Caco-2 (cell line): ENCODE measurements at regions of chr2 and their contacts with region 1.

Region 1: DNA sequence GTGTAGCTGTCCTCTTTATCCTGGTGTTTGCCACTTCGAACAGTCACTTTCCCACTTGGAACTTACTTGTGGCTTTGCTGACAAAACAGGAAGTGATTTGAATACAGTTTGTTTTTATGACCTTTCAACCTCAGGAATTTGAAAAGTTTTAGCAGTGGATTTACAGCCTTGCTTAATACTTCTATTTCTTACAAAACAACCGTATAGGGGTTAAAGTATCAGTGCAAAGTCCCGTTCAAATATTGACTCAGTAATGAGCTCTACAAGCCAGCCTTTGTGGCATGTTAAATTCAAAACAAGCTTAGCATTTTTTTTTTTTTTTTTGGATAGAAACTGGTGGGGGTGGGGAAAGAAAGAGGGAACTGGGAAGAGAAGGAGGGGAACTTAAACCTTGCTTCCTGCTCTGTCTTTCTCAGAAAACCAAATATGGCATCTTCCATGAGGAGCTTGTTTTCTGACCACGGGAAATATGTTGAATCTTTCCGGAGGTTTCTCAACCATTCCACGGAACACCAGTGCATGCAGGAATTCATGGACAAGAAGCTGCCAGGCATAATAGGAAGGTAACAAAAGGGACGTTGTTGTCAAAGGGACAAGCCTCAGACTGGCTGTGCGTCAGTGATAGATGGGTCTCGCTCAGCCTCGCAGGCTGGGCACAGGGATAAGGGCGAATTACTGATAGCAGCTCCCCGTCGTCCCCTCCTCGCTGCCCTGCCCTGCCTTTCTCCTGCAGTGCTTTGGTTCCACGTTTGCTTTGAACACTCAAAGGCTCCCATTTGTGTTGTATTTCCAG is at the start of gene HNMT:
- DNase-seq: peak; percentile 80 to 84
- H3K4me3 ChIP-seq: peak within 1 kb of the TSS; percentile 50
- H3K4me3 Mint-ChIP-seq: peak within 1 kb of the TSS; percentile 93
- H3K27ac Mint-ChIP-seq: peak within 1 kb of the TSS; percentile 98
- H3K4me1 ChIP-seq: peaks cover 40% of the 10 kb centered on the region
- H3K4me1 Mint-ChIP-seq: peaks cover 24% of the 10 kb centered on the region
- H3K27me3 ChIP-seq: no peaks in the 10 kb centered on the region
- H3K27me3 Mint-ChIP-seq: no peaks in the 10 kb centered on the region
- CTCF ChIP-seq: no peak
- total RNA-seq, gene HNMT: 42.8 and 44.6 TPM in 2 replicates

Region 2: DNA sequence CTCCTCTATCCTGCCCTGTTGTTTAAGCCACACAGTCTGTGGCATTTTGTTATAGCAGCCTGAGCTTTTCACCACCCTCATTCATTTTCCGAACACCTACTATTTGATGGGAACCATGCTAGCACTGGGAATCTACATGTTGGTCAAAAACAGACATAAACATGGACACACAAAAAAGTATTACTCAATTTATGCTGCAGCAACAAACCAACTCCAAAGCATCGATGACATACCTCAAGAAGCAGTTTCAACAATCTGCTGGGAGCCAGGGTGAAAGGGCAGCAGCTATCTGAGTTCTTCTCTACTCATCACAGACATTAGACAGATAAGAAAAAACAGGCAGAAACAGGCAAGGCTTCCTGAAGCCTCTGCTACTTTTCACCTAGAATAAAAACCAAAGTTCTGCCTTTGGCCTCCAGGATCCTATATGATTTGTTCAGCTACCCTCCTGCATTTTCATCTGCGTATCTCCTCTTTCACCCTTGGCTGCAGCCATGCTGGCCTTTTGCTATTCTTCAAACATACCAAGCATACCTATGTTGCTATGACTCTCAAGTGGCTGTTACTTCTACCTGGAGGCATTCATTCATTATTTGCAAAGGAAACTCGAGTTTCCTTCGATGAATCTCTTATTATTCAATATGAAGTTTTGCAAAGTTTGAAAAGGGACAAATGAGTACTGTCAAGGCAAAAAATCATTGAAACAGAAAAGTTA is 106.5 kb before region 1 on chr2:
- CTCF ChIA-PET with region 1: no interaction called
- POLR2A ChIA-PET with region 1: no interaction called
- intact Hi-C with region 1: no loop called
- DNase-seq: peak; percentile 60 to 63
- H3K4me3 ChIP-seq: no peak overlapping the region
- H3K4me3 Mint-ChIP-seq: peak overlapping the region; percentile 57
- H3K27ac Mint-ChIP-seq: peak overlapping the region; percentile 76
- H3K4me1 ChIP-seq: peaks cover 43% of the 10 kb centered on the region
- H3K4me1 Mint-ChIP-seq: peaks cover 36% of the 10 kb centered on the region
- H3K27me3 ChIP-seq: no peaks in the 10 kb centered on the region
- H3K27me3 Mint-ChIP-seq: no peaks in the 10 kb centered on the region
- CTCF ChIP-seq: no peak

Region 3: DNA sequence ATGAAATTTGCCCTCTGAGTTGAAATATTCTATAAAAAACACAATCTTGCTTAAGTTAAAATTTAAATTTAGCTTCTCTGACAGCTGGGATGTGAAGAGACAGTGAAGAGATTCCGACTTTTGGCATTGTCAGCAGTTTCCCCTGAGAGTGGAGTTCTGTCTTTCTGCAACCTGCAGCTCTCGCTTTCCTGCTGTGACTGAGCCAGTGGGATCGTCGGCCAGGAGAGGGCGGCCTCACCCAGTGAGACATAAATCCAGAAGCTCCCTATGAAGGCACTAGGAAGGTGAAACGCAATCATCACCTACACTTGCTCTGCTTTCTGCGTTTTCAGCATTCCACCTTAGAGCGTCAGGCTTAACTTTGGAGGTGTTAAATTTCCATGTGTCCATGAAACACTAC is 75.4 kb before region 1 on chr2:
- CTCF ChIA-PET with region 1: interaction called, 19 read pairs
- POLR2A ChIA-PET with region 1: interaction called, 3 read pairs
- intact Hi-C with region 1: no loop called
- DNase-seq: peak; percentile 75 to 76
- H3K4me3 ChIP-seq: no peak overlapping the region
- H3K4me3 Mint-ChIP-seq: no peak overlapping the region
- H3K27ac Mint-ChIP-seq: no peak overlapping the region
- H3K4me1 ChIP-seq: peaks cover 12% of the 10 kb centered on the region
- H3K4me1 Mint-ChIP-seq: peaks cover 11% of the 10 kb centered on the region
- H3K27me3 ChIP-seq: no peaks in the 10 kb centered on the region
- H3K27me3 Mint-ChIP-seq: no peaks in the 10 kb centered on the region
- CTCF ChIP-seq: peak; percentile 69 to 81

Region 4: DNA sequence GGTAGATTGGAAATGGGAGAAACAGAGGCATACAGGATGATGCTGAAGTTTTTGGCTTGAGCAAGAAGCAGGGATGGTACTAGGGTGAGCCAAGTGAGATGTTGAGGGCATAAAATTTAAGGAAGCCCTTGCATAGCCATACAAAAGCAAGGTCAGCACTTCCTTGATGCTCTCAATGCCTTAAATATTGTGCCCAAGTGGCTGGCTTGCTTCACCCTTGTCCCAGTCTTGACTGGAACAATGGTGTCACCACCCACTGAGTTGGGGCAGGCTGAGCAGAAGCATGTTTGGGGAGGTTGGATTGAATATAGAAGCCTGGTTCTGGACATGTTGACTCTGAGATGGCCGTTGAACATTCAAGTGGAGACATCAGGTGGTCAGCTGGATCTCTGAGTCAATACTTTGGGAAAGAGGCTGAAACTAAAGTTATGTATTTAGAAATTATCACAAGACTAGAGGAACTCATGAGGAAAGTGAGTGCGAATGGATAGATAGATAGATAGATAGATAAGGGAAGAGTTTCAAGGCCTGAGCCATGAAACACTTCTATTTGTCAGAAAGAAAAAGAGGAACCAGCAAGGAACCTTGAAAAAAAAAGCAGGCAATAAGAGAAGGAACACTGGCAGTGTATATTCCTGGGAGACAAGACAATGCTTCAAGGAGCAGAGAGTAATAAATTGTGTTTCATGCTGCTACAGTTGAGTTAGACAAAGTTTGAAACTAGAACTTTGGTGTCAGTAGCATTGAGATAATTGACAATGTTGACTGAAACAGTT is 43.0 kb before region 1 on chr2:
- CTCF ChIA-PET with region 1: no interaction called
- POLR2A ChIA-PET with region 1: no interaction called
- intact Hi-C with region 1: no loop called
- DNase-seq: no peak
- H3K4me3 ChIP-seq: no peak overlapping the region
- H3K4me3 Mint-ChIP-seq: no peak overlapping the region
- H3K27ac Mint-ChIP-seq: no peak overlapping the region
- H3K4me1 ChIP-seq: no peaks in the 10 kb centered on the region
- H3K4me1 Mint-ChIP-seq: no peaks in the 10 kb centered on the region
- H3K27me3 ChIP-seq: no peaks in the 10 kb centered on the region
- H3K27me3 Mint-ChIP-seq: no peaks in the 10 kb centered on the region
- CTCF ChIP-seq: no peak

Region 5: DNA sequence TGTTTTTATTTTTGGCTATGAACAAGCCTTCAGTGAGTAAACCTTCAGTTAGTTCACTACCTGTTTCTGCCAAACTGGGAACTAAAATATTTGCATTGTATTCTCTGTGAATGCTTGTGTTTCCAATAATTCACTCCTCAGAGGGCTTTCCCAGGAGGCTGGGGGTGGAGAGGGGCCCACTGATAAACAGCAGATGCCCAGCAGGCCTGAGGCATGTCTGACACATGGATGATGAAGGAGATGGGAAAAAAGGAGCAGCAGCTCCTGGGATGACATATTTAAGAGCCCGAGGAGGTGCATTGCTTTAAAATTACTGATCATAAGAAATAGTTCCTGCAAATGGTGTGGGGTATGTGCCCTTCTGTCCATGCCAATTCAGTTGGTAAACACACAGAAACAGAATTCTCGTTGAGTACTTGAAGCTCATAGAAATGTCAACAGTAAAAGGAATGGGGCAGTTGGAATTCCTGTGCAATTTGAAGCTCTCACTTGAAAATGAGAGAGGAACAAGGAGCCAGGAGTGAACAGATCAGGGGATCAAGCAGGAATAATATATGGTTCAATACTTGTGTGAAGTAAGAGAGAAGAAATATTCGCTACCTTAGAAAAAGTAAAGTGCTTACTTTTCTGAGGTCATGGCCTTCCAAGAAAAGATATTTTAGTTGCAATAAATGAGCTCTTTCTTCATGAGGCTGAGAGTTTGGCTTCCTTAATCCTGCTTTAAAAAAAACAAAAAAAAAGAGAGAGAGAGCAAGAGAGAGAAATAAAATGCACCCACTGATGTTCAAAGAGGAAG is 22.0 kb before region 1 on chr2:
- CTCF ChIA-PET with region 1: no interaction called
- POLR2A ChIA-PET with region 1: no interaction called
- intact Hi-C with region 1: no loop called
- DNase-seq: no peak
- H3K4me3 ChIP-seq: no peak overlapping the region
- H3K4me3 Mint-ChIP-seq: peak overlapping the region; percentile 16
- H3K27ac Mint-ChIP-seq: peak overlapping the region; percentile 42
- H3K4me1 ChIP-seq: peaks cover 27% of the 10 kb centered on the region
- H3K4me1 Mint-ChIP-seq: peaks cover 46% of the 10 kb centered on the region
- H3K27me3 ChIP-seq: no peaks in the 10 kb centered on the region
- H3K27me3 Mint-ChIP-seq: no peaks in the 10 kb centered on the region
- CTCF ChIP-seq: no peak

Region 6: GRCh38 chr2:137975280-137976265 is 11.3 kb after region 1 on chr2:
- CTCF ChIA-PET with region 1: interaction called, 10 read pairs
- POLR2A ChIA-PET with region 1: interaction called, 18 read pairs
- intact Hi-C with region 1: loop called (anchors 1 kb)
- DNase-seq: peak in 1 of 2 experiments; percentile 76
- H3K4me3 ChIP-seq: no peak overlapping the region
- H3K4me3 Mint-ChIP-seq: peak overlapping the region; percentile 25
- H3K27ac Mint-ChIP-seq: peak overlapping the region; percentile 57
- H3K4me1 ChIP-seq: peaks cover 49% of the 10 kb centered on the region
- H3K4me1 Mint-ChIP-seq: peaks cover 27% of the 10 kb centered on the region
- H3K27me3 ChIP-seq: no peaks in the 10 kb centered on the region
- H3K27me3 Mint-ChIP-seq: no peaks in the 10 kb centered on the region
- CTCF ChIP-seq: no peak

Region 7: GRCh38 chr2:138071720-138072719 is 107.8 kb after region 1 on chr2:
- CTCF ChIA-PET with region 1: interaction called, 3 read pairs
- POLR2A ChIA-PET with region 1: interaction called, 5 read pairs
- intact Hi-C with region 1: loop called (anchors 1 kb)
- DNase-seq: peak; percentile 65 to 69
- H3K4me3 ChIP-seq: no peak overlapping the region
- H3K4me3 Mint-ChIP-seq: peak overlapping the region; percentile 42
- H3K27ac Mint-ChIP-seq: peak overlapping the region; percentile 24
- H3K4me1 ChIP-seq: peaks cover 23% of the 10 kb centered on the region
- H3K4me1 Mint-ChIP-seq: peaks cover 7% of the 10 kb centered on the region
- H3K27me3 ChIP-seq: no peaks in the 10 kb centered on the region
- H3K27me3 Mint-ChIP-seq: no peaks in the 10 kb centered on the region
- CTCF ChIP-seq: no peak

Region 8: GRCh38 chr2:138501425-138502283 is 537.4 kb after region 1 on chr2 and contains the start of gene SPOPL:
- CTCF ChIA-PET with region 1: no interaction called
- POLR2A ChIA-PET with region 1: no interaction called
- intact Hi-C with region 1: loop called (anchors 5 kb)
- DNase-seq: peak; percentile 94 to 97
- H3K4me3 ChIP-seq: peak within 1 kb of the TSS; percentile 89
- H3K4me3 Mint-ChIP-seq: peak within 1 kb of the TSS; percentile 88
- H3K27ac Mint-ChIP-seq: peak within 1 kb of the TSS; percentile 92
- H3K4me1 ChIP-seq: peaks cover 37% of the 10 kb centered on the region
- H3K4me1 Mint-ChIP-seq: peaks cover 14% of the 10 kb centered on the region
- H3K27me3 ChIP-seq: no peaks in the 10 kb centered on the region
- H3K27me3 Mint-ChIP-seq: no peaks in the 10 kb centered on the region
- CTCF ChIP-seq: peak; percentile 10 to 21
- total RNA-seq, gene SPOPL: 31.6 and 32.9 TPM in 2 replicates